Activated naive CD4-positive, alpha-beta T cell treated with anti-CD3 and anti-CD28 coated beads for 36 hours (primary cell): ENCODE measurements at regions of chr12 and their contacts with region 1.

Region 1: DNA sequence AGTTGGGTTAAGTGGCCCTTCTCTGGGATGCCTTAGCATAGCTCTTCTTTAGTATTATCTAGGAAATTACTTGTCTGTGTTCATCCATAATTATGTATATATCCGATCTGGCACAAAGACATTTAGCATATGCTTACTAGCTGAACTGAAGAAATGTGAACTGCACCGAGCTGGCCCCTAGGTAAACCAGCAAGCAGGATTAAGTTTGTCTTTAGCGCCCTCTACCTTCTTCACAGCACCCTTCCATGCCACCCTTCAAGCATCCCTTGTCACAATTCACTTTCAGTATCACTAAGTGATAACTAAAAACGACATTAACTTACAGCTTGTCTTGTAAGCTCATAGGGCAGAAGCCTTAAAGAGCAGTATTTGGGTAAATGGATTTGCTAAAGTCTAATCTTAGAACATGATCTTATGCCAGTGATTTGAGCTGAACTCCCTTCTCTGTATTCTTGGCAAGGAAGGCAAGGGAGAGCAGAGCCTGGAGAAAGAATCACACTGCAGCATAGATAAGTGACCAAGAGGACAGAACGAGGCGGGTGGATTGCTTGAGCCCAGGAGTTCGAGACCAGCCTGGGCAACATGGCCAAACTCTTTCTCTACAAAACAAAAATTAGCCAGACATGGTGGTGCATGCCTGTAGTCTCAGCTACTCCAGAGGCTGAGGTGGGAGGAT is 2.6 kb upstream of the HAL start:
- DNase-seq: peak; percentile 71
- H3K4me3 Mint-ChIP-seq: no peak overlapping the region
- H3K27ac Mint-ChIP-seq: no peak overlapping the region
- H3K4me1 Mint-ChIP-seq: peaks cover 3% of the 10 kb centered on the region
- H3K27me3 Mint-ChIP-seq: no peaks in the 10 kb centered on the region

Region 2: DNA sequence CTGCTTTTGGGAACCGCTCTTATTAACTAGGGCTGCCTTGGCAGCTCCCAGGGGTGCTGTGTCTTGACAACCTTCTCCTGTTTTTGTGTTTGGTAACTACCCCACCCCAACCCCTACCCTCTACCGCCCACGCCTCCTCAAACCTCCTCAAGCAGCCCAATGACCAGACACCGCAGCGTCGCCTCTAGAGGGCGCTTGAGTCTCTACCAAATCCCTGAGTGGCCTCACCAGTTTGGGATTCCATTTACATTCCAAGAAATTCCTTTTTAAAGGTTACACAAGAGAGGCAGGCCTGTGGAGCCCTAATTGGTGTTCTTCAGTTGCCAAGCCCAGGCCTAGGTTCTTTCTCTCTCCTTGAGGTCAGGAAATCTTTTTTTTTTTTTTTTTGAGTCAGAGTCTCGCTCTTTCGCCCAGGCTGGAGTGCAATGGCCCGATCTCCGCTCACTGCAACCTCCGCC is 375.1 kb before region 1 on chr12:
- CTCF ChIA-PET with region 1: interaction called, 4 read pairs
- intact Hi-C with region 1: loop called (anchors 1 kb)
- DNase-seq: peak; percentile 44
- H3K4me3 Mint-ChIP-seq: no peak overlapping the region
- H3K27ac Mint-ChIP-seq: no peak overlapping the region
- H3K4me1 Mint-ChIP-seq: no peaks in the 10 kb centered on the region
- H3K27me3 Mint-ChIP-seq: no peaks in the 10 kb centered on the region

Region 3: GRCh38 chr12:95701722-95702418 is 296.9 kb before region 1 on chr12:
- CTCF ChIA-PET with region 1: no interaction called
- intact Hi-C with region 1: no loop called
- DNase-seq: no peak
- H3K4me3 Mint-ChIP-seq: no peak overlapping the region
- H3K27ac Mint-ChIP-seq: no peak overlapping the region
- H3K4me1 Mint-ChIP-seq: no peaks in the 10 kb centered on the region
- H3K27me3 Mint-ChIP-seq: peaks cover 5% of the 10 kb centered on the region

Region 4: GRCh38 chr12:95858479-95859343 is 140.0 kb before region 1 on chr12 and contains the start of gene SNRPF:
- CTCF ChIA-PET with region 1: interaction called, 3 read pairs
- intact Hi-C with region 1: loop called (anchors 1 kb)
- DNase-seq: peak; percentile 97
- H3K4me3 Mint-ChIP-seq: no peak within 1 kb of the TSS
- H3K27ac Mint-ChIP-seq: no peak within 1 kb of the TSS
- H3K4me1 Mint-ChIP-seq: peaks cover 25% of the 10 kb centered on the region
- H3K27me3 Mint-ChIP-seq: peaks cover 3% of the 10 kb centered on the region
- total RNA-seq, gene SNRPF: 57.4 to 59.9 TPM

Region 5: DNA sequence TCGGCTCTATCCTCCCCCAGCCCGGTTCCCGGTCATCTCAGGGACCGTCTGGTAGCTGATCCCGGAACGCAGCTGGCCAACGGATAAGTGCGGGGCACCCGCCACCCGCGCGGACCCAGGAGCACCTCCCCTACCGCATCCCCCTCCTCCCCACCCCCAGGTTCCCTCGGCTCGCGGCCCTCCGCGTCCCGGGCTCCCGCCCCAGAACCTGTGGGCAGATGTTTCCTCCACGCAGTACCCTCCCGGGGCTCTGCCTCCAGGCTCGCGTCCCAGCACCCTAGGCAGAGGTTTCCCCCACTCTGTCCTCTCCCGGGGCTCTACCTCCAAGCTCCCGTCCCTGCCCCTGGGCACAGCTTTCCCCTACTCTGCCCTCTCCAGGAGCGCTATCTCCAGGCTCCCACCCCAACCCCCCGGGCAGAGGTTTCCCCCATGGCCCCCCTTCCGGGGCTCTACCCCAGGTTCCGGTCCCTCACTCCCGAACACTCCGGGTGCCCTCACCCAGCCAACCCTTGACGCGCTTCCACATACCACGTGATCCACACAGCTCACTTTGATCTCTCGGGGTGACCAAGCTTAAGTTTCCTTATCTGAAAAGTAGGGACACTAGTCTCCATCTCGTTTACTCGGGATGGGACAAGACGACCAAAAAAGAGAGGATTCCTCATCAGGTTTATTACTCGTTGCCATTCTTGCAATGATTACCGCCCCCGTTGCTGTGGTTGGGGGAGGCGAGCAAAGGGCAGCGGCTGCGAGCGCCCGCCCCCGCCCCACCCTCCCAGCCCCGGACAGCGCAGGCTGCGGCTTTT is 56.0 kb before region 1 on chr12 and contains the start of gene CCDC38:
- CTCF ChIA-PET with region 1: interaction called, 18 read pairs
- intact Hi-C with region 1: loop called (anchors 1 kb)
- DNase-seq: peak; percentile 91
- H3K4me3 Mint-ChIP-seq: peak within 1 kb of the TSS; percentile 86
- H3K27ac Mint-ChIP-seq: peak within 1 kb of the TSS; percentile 80
- H3K4me1 Mint-ChIP-seq: peaks cover 4% of the 10 kb centered on the region
- H3K27me3 Mint-ChIP-seq: no peaks in the 10 kb centered on the region
- total RNA-seq, gene CCDC38: 0.49 TPM in 1 of 2 experiments, not detected in the other

Region 6: GRCh38 chr12:95986635-95987570 is 11.8 kb before region 1 on chr12:
- CTCF ChIA-PET with region 1: interaction called, 10 read pairs
- intact Hi-C with region 1: no loop called
- DNase-seq: no peak
- H3K4me3 Mint-ChIP-seq: no peak overlapping the region
- H3K27ac Mint-ChIP-seq: no peak overlapping the region
- H3K4me1 Mint-ChIP-seq: no peaks in the 10 kb centered on the region
- H3K27me3 Mint-ChIP-seq: no peaks in the 10 kb centered on the region

Region 7: GRCh38 chr12:96070670-96071279 is 72.0 kb after region 1 on chr12:
- CTCF ChIA-PET with region 1: no interaction called
- intact Hi-C with region 1: no loop called
- DNase-seq: peak; percentile 25
- H3K4me3 Mint-ChIP-seq: no peak overlapping the region
- H3K27ac Mint-ChIP-seq: no peak overlapping the region
- H3K4me1 Mint-ChIP-seq: peaks cover 20% of the 10 kb centered on the region
- H3K27me3 Mint-ChIP-seq: no peaks in the 10 kb centered on the region

Region 8: GRCh38 chr12:96516472-96517430 is 518.0 kb after region 1 on chr12:
- CTCF ChIA-PET with region 1: interaction called, 9 read pairs
- intact Hi-C with region 1: loop called (anchors 1 kb)
- DNase-seq: peak; percentile 96
- H3K4me3 Mint-ChIP-seq: peak overlapping the region; percentile 2
- H3K27ac Mint-ChIP-seq: peak overlapping the region; percentile 25
- H3K4me1 Mint-ChIP-seq: peaks cover 16% of the 10 kb centered on the region
- H3K27me3 Mint-ChIP-seq: no peaks in the 10 kb centered on the region